ENCODE measurements at regions of chr11 and their contacts with region 1.

Region 1: DNA sequence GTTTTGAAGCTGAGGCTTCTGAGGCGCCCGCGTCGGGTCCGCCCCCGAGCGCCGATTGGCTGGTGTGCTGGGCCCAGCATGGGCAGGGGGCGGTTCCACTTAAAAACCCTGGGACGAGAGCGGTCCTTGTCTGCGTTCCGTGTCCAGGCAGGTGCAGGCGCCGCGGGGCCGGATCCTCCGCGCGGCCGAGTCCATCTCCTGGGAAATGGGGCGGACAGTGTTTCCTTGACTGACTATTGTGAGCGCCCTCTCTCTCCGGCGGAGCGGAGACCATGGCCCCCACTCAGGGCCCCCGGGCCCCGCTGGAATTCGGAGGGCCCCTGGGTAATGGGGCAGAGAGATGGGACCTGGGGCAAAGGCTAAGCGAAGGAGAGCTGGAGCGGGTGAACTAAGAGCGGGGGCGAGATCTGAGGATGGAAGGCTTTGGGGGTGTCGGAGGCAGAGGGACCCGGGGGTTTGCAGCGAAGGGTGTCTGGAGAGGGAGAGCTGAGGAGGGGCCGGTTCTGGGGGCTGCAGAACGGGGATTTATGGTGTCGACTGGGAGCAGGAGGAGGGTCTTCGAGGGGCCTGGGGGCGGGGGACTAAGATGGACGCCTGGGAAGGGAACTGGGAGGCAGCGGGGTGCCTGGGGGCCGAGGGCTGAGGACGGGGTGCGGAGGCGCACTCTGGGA is at the start of gene TM7SF2:
- DNase-seq: peak; percentile 94 to 96
- ATAC-seq: peak; percentile 76 to 87 (median 82)
- H3K4me3 ChIP-seq: peak within 1 kb of the TSS; percentile 62
- H3K4me3 Mint-ChIP-seq: peak within 1 kb of the TSS; percentile 96
- H3K27ac ChIP-seq: peak within 1 kb of the TSS; percentile 58
- H3K27ac Mint-ChIP-seq: peak within 1 kb of the TSS; percentile 91 to 97
- H3K4me1 ChIP-seq: peaks cover 59% of the 10 kb centered on the region
- H3K4me1 Mint-ChIP-seq: peaks cover 35% of the 10 kb centered on the region in 2 donors
- H3K27me3 ChIP-seq: no peaks in the 10 kb centered on the region
- H3K27me3 Mint-ChIP-seq: no peaks in the 10 kb centered on the region
- CTCF ChIP-seq: no peak
- total RNA-seq, gene TM7SF2: 17.0 to 23.2 (median 18.6) TPM

Region 2: GRCh38 chr11:64996710-64997380 is 115.0 kb before region 1 on chr11 and contains the start of gene BATF2:
- intact Hi-C with region 1: no loop called
- DNase-seq: peak in 1 of 2 donors; percentile 33
- ATAC-seq: peak; percentile 54 to 61 (median 58)
- H3K4me3 ChIP-seq: peak within 1 kb of the TSS; percentile 0
- H3K4me3 Mint-ChIP-seq: no peak within 1 kb of the TSS
- H3K27ac ChIP-seq: no peak within 1 kb of the TSS
- H3K27ac Mint-ChIP-seq: peak within 1 kb of the TSS in 1 of 2 donors; percentile 53
- H3K4me1 ChIP-seq: peaks cover 8% of the 10 kb centered on the region
- H3K4me1 Mint-ChIP-seq: peaks cover 0 to 9% of the 10 kb centered on the region in 2 donors
- H3K27me3 ChIP-seq: no peaks in the 10 kb centered on the region
- H3K27me3 Mint-ChIP-seq: no peaks in the 10 kb centered on the region
- CTCF ChIP-seq: no peak
- total RNA-seq, gene BATF2: 0.30 TPM in 1 of 3 donors, not detected in the others

Region 3: DNA sequence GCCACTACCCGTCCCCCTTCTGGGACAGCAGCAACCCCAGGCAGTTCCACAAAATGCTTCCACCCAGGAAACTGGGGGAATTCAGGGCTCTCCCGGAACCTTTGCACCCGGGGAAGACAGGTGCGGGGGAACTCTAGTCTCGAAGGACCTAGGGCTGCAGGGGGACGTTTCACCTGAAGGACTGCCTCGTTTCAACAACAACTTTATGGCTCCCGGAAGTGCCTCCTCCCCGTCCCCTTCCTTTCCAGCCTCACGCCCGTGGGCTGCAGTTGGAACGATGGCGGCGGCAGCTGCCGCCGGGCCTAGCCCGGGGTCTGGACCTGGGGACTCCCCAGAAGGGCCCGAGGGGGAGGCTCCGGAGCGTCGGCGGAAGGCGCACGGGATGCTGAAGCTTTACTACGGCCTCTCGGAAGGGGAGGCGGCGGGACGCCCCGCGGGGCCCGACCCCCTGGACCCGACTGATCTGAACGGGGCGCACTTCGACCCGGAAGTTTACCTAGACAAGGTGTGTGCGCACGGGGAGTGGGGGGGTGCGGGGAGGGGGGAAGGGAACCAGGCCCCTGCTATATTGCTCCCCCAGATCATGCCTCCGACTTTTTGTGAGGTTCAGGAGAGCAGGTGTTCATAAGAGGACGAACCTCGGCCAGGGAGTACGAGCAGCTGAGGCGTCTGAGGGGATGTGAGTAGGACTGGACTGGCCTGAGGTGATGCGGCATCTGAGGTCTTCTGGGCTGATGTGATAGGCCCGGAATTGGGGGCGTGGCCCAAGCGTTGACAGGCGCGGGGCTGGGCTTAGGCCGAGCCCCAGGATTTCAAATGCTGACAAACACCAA is 15.7 kb before region 1 on chr11 and contains the start of gene VPS51:
- intact Hi-C with region 1: loop called (anchors 1 kb)
- DNase-seq: peak; percentile 79 to 95
- ATAC-seq: peak; percentile 89 to 96 (median 92)
- H3K4me3 ChIP-seq: peak within 1 kb of the TSS; percentile 85
- H3K4me3 Mint-ChIP-seq: peak within 1 kb of the TSS; percentile 92
- H3K27ac ChIP-seq: peak within 1 kb of the TSS; percentile 76
- H3K27ac Mint-ChIP-seq: peak within 1 kb of the TSS; percentile 83 to 92
- H3K4me1 ChIP-seq: peaks cover 19% of the 10 kb centered on the region
- H3K4me1 Mint-ChIP-seq: peaks cover 0 to 14% of the 10 kb centered on the region in 2 donors
- H3K27me3 ChIP-seq: no peaks in the 10 kb centered on the region
- H3K27me3 Mint-ChIP-seq: no peaks in the 10 kb centered on the region
- CTCF ChIP-seq: no peak
- total RNA-seq, gene VPS51: 180 to 197 (median 184) TPM

Region 4: GRCh38 chr11:65180877-65181568 is 69.1 kb after region 1 on chr11:
- intact Hi-C with region 1: loop called (anchors 2 kb)
- DNase-seq: peak; percentile 52 to 74
- ATAC-seq: peak; percentile 80 to 86 (median 82)
- H3K4me3 ChIP-seq: peak overlapping the region; percentile 83
- H3K4me3 Mint-ChIP-seq: peak overlapping the region; percentile 88
- H3K27ac ChIP-seq: peak overlapping the region; percentile 50
- H3K27ac Mint-ChIP-seq: peak overlapping the region in 1 of 2 donors; percentile 87
- H3K4me1 ChIP-seq: peaks cover 25% of the 10 kb centered on the region
- H3K4me1 Mint-ChIP-seq: peaks cover 14 to 40% of the 10 kb centered on the region in 2 donors
- H3K27me3 ChIP-seq: no peaks in the 10 kb centered on the region
- H3K27me3 Mint-ChIP-seq: no peaks in the 10 kb centered on the region
- CTCF ChIP-seq: peak; percentile 46

Region 5: GRCh38 chr11:65314501-65315203 is 202.8 kb after region 1 on chr11 and contains the start of gene CDC42EP2:
- intact Hi-C with region 1: loop called (anchors 5 kb)
- DNase-seq: peak; percentile 54 to 82
- ATAC-seq: peak; percentile 90 to 92 (median 91)
- H3K4me3 ChIP-seq: peak within 1 kb of the TSS; percentile 75
- H3K4me3 Mint-ChIP-seq: peak within 1 kb of the TSS; percentile 81
- H3K27ac ChIP-seq: no peak within 1 kb of the TSS
- H3K27ac Mint-ChIP-seq: peak within 1 kb of the TSS in 1 of 2 donors; percentile 42
- H3K4me1 ChIP-seq: peaks cover 21% of the 10 kb centered on the region
- H3K4me1 Mint-ChIP-seq: peaks cover 0 to 5% of the 10 kb centered on the region in 2 donors
- H3K27me3 ChIP-seq: no peaks in the 10 kb centered on the region
- H3K27me3 Mint-ChIP-seq: peaks cover 0 to 12% of the 10 kb centered on the region in 2 donors
- CTCF ChIP-seq: no peak
- total RNA-seq, gene CDC42EP2: 1.4 to 1.5 (median 1.5) TPM